ENCODE measurements at regions of chr5 and their contacts with region 1.

Region 1: DNA sequence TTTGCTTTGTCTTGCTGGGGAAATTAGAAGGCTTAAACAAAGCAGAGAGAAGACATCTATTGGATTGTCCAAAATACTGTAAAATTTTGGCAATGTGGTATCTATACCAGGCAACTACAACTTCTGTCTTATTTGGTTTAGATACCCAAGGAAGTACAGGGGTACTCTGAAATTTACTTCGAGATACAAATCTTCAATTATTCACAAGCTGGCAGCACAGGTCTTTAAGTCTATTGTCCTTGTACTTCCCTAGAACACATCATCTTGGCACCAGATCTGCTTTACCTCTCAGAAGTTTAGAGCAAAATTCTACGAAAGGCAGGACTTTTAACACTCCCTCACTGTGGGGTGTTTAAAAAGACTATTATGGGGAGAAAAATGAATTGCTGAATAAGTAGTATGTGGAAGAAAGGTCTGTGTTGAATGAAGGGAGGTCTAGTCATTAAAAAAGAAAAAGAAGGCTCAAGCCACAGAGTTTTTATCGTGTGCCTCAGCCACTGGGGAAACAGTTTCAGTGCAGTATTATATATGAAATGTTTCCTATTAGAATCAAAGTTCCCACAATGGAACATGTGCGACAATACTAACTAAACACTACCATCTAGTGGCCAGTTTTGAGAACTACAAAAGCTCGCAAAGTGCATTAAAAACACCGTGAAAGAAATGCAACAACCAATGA is 93.7 kb downstream of the PDE4D start:
- DNase-seq: no peak
- H3K4me3 ChIP-seq: peak overlapping the region in 1 of 4 donors; percentile 26
- H3K27ac ChIP-seq: peak overlapping the region; percentile 67 to 75 (median 72)
- H3K4me1 ChIP-seq: peaks cover 0 to 21% (median 17%) of the 10 kb centered on the region in 4 donors
- H3K27me3 ChIP-seq: no peaks in the 10 kb centered on the region
- CTCF ChIP-seq: peak; percentile 77 to 84 (median 81)
- EP300 ChIP-seq: no peak
- POLR2A ChIP-seq: no peak

Region 2: GRCh38 chr5:58886315-58887207 is 913.2 kb before region 1 on chr5:
- in situ Hi-C with region 1: loop called in 2 of 4 experiments (anchors 10 to 25 kb)
- intact Hi-C with region 1: no loop called
- DNase-seq: peak; percentile 60
- H3K4me3 ChIP-seq: no peak overlapping the region
- H3K27ac ChIP-seq: no peak overlapping the region
- H3K4me1 ChIP-seq: peaks cover 0 to 3% (median under 1%) of the 10 kb centered on the region in 4 donors
- H3K27me3 ChIP-seq: no peaks in the 10 kb centered on the region
- CTCF ChIP-seq: peak; percentile 70 to 93 (median 90)
- EP300 ChIP-seq: no peak
- POLR2A ChIP-seq: no peak

Region 3: DNA sequence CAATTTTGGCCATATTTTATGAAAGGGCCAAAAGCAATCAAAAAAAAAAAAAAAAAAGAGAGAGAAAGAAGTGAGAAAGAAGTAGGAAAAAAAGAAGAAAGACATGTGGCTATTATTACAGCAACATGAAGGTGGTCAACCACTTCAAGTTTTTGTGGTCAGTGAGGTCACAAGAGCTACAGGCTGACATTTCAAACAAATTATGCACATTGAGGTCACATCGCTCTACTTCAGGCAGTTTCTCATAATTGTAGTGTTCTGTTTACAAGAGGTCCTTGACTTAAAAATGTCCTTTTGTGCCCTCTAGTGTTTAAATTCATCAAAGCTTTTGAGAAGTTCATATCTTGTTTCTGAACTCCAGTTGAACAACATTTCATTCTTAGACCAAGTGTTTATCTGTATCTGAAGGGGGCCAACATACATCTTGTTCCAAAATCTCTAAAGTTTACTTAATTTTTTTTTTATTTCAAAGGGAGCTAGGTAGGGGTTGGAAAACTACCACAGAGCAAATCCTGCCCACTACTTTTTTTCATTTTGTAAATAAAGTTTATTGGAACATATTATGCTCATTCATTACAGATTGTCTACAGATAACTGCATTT is 419.4 kb before region 1 on chr5:
- in situ Hi-C with region 1: loop called in 3 of 4 experiments (anchors 5 to 25 kb)
- intact Hi-C with region 1: no loop called
- DNase-seq: no peak
- H3K4me3 ChIP-seq: no peak overlapping the region
- H3K27ac ChIP-seq: peak overlapping the region; percentile 15 to 60 (median 34)
- H3K4me1 ChIP-seq: peaks cover 0 to 12% (median 0%) of the 10 kb centered on the region in 4 donors
- H3K27me3 ChIP-seq: no peaks in the 10 kb centered on the region
- CTCF ChIP-seq: peak; percentile 43 to 63 (median 56)
- EP300 ChIP-seq: no peak
- POLR2A ChIP-seq: no peak

Region 4: GRCh38 chr5:59506285-59506877 is 293.4 kb before region 1 on chr5:
- in situ Hi-C with region 1: loop called in 1 of 4 experiments (anchors 25 kb)
- intact Hi-C with region 1: no loop called
- DNase-seq: no peak
- H3K4me3 ChIP-seq: no peak overlapping the region
- H3K27ac ChIP-seq: no peak overlapping the region
- H3K4me1 ChIP-seq: peaks cover 0 to 9% (median 4%) of the 10 kb centered on the region in 4 donors
- H3K27me3 ChIP-seq: no peaks in the 10 kb centered on the region
- CTCF ChIP-seq: peak; percentile 53 to 68 (median 59)
- EP300 ChIP-seq: no peak
- POLR2A ChIP-seq: no peak

Region 5: DNA sequence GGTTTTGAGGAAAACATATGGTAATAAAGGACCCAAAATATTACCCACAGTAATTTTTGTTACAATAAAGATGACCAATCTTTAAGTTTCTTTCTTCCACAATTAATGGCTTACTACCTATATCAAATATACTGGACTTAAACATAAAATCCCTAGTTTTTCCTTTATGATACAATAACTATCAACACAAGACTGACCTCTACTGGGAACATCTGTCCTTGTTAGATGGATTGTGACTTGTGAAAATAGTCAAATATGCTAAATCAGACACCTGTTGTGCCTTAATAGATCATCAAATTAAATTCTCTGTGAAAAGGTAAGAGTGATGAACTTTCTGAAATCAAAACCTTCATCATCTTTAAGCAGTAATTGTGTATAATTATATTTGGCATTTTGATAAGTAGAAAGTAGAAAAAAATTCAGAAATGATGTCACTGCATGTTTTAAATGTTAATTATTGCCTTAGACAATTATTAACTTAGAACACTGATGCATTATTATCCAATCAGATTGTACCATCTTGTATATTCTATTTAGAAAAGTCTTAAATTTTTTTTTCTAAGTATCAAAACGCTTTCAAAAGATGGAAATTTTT is 786.6 kb after region 1 on chr5:
- in situ Hi-C with region 1: loop called in 2 of 4 experiments (anchors 10 to 25 kb)
- intact Hi-C with region 1: no loop called
- DNase-seq: no peak
- H3K4me3 ChIP-seq: no peak overlapping the region
- H3K27ac ChIP-seq: no peak overlapping the region
- H3K4me1 ChIP-seq: peaks cover 0 to 10% (median 6%) of the 10 kb centered on the region in 4 donors
- H3K27me3 ChIP-seq: no peaks in the 10 kb centered on the region
- CTCF ChIP-seq: peak in 3 of 5 experiments; percentile 24 to 52 (median 34)
- EP300 ChIP-seq: no peak
- POLR2A ChIP-seq: no peak

Measured in transverse colon (tissue), 4 donors.